ENCODE measurements at regions of chr22 and their contacts with region 1.

Region 1: GRCh38 chr22:22593964-22594656 is 35.0 kb upstream of the PRAME start:
- DNase-seq: peak; percentile 33

Region 2: GRCh38 chr22:22342697-22343580 is 251.2 kb before region 1 on chr22:
- in situ Hi-C with region 1: loop called (anchors 25 kb)
- DNase-seq: peak; percentile 40

Measured in Caki2 (cell line).